Posterior vena cava (tissue), 2 donors: ENCODE measurements at regions of chr6 and their contacts with region 1.

Region 1: GRCh38 chr6:17289630-17290061 is 8.5 kb downstream of the RBM24 start:
- DNase-seq: no peak

Region 2: GRCh38 chr6:17381424-17382147 is 91.9 kb after region 1 on chr6:
- intact Hi-C with region 1: loop called in 1 of 2 experiments (anchors 5 kb)
- DNase-seq: no peak